WTC11 (cell line): ENCODE measurements at regions of chr17 and their contacts with region 1.

Region 1: DNA sequence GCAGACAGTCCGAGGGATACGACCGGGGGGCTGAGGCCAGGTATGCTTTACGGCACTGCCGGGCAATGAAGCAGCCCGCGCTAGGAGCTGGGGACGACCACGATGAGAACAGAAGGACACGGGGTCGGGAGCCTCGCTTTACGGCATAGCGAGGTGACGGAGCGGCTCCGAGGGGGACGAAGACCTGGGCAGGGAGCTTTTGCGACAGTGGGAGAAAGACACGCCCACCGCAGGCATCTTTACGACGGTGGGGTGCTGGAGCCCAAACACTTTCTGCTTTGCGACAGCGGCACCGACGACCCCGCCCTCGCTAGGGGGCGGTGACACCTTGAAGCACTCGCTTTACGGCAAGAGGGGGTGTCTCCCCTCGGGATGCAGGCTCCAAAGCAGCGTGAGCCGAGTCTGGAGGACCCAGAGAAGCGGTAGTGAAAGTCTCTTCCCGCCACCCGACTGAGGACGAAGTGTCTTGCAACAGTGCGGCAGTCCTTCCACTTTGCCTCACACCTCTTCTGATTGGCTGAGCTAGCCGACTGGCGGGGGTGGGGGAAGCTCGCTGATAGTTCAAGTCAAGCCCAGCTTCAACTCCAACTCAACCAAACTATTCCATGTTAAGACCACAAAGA is 350 bp upstream of the NEURL4 start:
- DNase-seq: peak; percentile 98
- ATAC-seq: peak; percentile 73
- H3K4me3 Mint-ChIP-seq: peak overlapping the region; percentile 93
- H3K27ac Mint-ChIP-seq: peak overlapping the region; percentile 100
- H3K4me1 Mint-ChIP-seq: peaks cover 24% of the 10 kb centered on the region
- H3K27me3 Mint-ChIP-seq: no peaks in the 10 kb centered on the region
- CTCF ChIP-seq: no peak

Region 2: GRCh38 chr17:7167832-7168231 is 161.7 kb before region 1 on chr17:
- CTCF ChIA-PET with region 1: no interaction called
- POLR2A ChIA-PET with region 1: no interaction called
- DNase-seq: no peak
- ATAC-seq: no peak
- H3K4me3 Mint-ChIP-seq: no peak overlapping the region
- H3K27ac Mint-ChIP-seq: no peak overlapping the region
- H3K4me1 Mint-ChIP-seq: peaks cover 4% of the 10 kb centered on the region
- H3K27me3 Mint-ChIP-seq: no peaks in the 10 kb centered on the region; the same call in none of the 2 replicates
- CTCF ChIP-seq: no peak

Region 3: DNA sequence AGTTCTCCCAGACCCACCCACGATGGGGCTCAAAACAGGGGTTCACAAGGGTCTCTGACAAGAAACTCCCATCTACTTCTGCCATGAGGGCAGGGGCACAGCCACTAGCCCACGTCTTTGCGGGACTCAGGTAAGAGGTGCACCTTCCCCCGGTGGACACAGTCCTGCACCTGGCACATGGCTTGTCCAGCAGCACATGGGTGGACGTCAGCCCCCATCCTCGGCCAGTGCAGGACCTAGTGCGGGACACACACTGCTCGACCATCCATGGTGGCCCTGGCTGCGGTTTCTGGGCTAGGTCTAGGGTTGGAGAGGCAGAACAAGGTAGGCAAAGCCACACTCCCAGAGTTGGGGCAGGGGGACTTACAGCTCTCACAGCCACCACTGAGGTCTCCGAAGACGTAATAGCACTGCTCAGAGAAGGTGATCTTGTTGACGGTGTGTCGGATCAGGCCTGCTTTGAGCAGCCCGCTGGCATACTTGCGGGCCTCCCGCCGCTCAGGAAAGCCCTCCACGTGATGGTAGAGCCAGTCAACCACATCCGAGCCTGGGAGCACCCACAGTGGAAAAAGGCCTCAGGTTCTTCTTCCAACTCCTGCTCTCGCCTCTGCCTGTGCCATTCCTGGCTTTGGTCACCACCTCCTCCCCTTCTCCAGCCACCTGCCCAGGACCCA is 102.6 kb before region 1 on chr17:
- CTCF ChIA-PET with region 1: no interaction called
- POLR2A ChIA-PET with region 1: no interaction called
- DNase-seq: no peak
- ATAC-seq: no peak
- H3K4me3 Mint-ChIP-seq: no peak overlapping the region
- H3K27ac Mint-ChIP-seq: no peak overlapping the region
- H3K4me1 Mint-ChIP-seq: peaks cover under 1% of the 10 kb centered on the region; the same call in 1 of the 2 replicates
- H3K27me3 Mint-ChIP-seq: no peaks in the 10 kb centered on the region
- CTCF ChIP-seq: no peak

Region 4: GRCh38 chr17:7314719-7315569 is 14.5 kb before region 1 on chr17 and contains the start of gene GPS2:
- CTCF ChIA-PET with region 1: interaction called, 19 read pairs
- POLR2A ChIA-PET with region 1: interaction called, 21 read pairs
- DNase-seq: peak; percentile 92
- ATAC-seq: peak; percentile 55
- H3K4me3 Mint-ChIP-seq: peak within 1 kb of the TSS; percentile 75
- H3K27ac Mint-ChIP-seq: peak within 1 kb of the TSS; percentile 95
- H3K4me1 Mint-ChIP-seq: peaks cover 30% of the 10 kb centered on the region
- H3K27me3 Mint-ChIP-seq: no peaks in the 10 kb centered on the region
- CTCF ChIP-seq: no peak
- total RNA-seq, gene GPS2: 42.2 to 55.9 TPM (median 44.7 TPM) in 3 replicates

Region 5: DNA sequence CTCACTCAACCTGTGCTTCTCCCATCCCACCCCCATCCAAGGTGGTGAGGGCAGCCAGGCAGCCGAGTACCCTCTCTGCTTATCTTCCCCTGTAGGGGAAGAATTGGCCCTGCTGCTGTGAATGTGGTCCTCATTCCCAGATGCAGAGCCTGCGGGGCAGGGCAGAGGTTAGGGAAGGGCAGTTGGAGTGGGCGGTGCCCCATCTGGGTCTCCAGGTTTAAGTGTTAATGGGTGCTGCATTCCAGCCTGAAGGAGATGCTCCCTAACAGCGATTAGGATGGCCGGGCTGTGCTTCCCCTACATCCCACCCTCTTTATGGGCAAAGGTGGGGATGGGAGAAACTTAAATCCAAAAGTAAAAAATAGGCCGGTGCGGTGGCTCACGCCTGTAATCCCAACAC is 37.6 kb after region 1 on chr17:
- CTCF ChIA-PET with region 1: no interaction called
- POLR2A ChIA-PET with region 1: no interaction called
- DNase-seq: no peak
- ATAC-seq: peak; percentile 74
- H3K4me3 Mint-ChIP-seq: no peak overlapping the region
- H3K27ac Mint-ChIP-seq: 0 out of 2 replicates have a peak overlapping the region, but pooled peaks have one; percentile 19
- H3K4me1 Mint-ChIP-seq: peaks cover 29% of the 10 kb centered on the region
- H3K27me3 Mint-ChIP-seq: peaks cover 4% of the 10 kb centered on the region
- CTCF ChIP-seq: no peak

Region 6: GRCh38 chr17:7403977-7404736 is 74.7 kb after region 1 on chr17 and contains the start of gene TMEM256:
- CTCF ChIA-PET with region 1: interaction called, 6 read pairs
- POLR2A ChIA-PET with region 1: interaction called, 10 read pairs
- DNase-seq: peak; percentile 99
- ATAC-seq: peak; percentile 87
- H3K4me3 Mint-ChIP-seq: peak within 1 kb of the TSS; percentile 84
- H3K27ac Mint-ChIP-seq: peak within 1 kb of the TSS; percentile 85
- H3K4me1 Mint-ChIP-seq: peaks cover 29% of the 10 kb centered on the region
- H3K27me3 Mint-ChIP-seq: no peaks in the 10 kb centered on the region; the same call in 1 of the 2 replicates
- CTCF ChIP-seq: no peak
- total RNA-seq, gene TMEM256: 132 to 180 TPM (median 178 TPM) in 3 replicates

Region 7: DNA sequence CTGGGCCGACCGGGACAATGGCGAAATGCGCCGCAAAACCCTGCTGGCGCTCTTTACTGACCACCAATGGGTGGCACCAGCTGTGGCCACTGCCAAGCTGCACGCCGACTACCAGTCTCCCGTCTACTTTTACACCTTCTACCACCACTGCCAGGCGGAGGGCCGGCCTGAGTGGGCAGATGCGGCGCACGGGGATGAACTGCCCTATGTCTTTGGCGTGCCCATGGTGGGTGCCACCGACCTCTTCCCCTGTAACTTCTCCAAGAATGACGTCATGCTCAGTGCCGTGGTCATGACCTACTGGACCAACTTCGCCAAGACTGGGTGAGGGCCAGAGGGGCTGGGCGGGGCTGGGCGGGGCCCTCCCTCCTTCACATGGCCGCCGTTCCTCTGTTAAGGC is 86.3 kb after region 1 on chr17:
- CTCF ChIA-PET with region 1: no interaction called
- POLR2A ChIA-PET with region 1: no interaction called
- DNase-seq: no peak
- ATAC-seq: no peak
- H3K4me3 Mint-ChIP-seq: no peak overlapping the region
- H3K27ac Mint-ChIP-seq: no peak overlapping the region
- H3K4me1 Mint-ChIP-seq: peaks cover 24% of the 10 kb centered on the region
- H3K27me3 Mint-ChIP-seq: no peaks in the 10 kb centered on the region
- CTCF ChIP-seq: no peak